Activated naive CD4-positive, alpha-beta T cell treated with anti-CD3 and anti-CD28 coated beads for 36 hours (primary cell): ENCODE measurements at regions of chr14 and their contacts with region 1.

Region 1: GRCh38 chr14:56195704-56196103 is 77.5 kb downstream of the PELI2 start:
- DNase-seq: peak; percentile 72
- H3K4me3 Mint-ChIP-seq: peak overlapping the region; percentile 54
- H3K27ac Mint-ChIP-seq: peak overlapping the region; percentile 76
- H3K4me1 Mint-ChIP-seq: peaks cover 25% of the 10 kb centered on the region
- H3K27me3 Mint-ChIP-seq: no peaks in the 10 kb centered on the region

Region 2: GRCh38 chr14:56081139-56081538 is 114.6 kb before region 1 on chr14:
- CTCF ChIA-PET with region 1: no interaction called
- intact Hi-C with region 1: no loop called
- DNase-seq: no peak
- H3K4me3 Mint-ChIP-seq: no peak overlapping the region
- H3K27ac Mint-ChIP-seq: no peak overlapping the region
- H3K4me1 Mint-ChIP-seq: no peaks in the 10 kb centered on the region
- H3K27me3 Mint-ChIP-seq: peaks cover 20% of the 10 kb centered on the region

Region 3: DNA sequence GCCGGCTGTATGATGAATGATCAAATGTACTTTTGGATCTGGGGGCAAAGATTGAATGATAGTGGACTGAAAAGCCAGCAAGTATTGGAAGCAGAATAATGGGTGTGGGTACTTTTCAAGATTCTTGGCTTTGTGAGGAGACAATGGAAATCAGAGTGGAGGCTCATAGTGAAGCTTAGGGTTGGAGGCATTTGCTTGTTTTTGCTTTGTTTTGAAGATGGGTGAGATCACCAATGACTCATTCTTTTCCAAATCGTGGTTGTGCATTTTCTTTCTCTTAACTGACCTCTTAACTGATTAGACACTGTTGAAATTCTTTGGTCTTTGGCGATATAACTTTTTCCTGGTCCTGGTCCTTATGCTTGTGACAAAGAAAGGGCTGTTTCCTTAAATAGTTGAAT is 23.1 kb before region 1 on chr14:
- CTCF ChIA-PET with region 1: no interaction called
- intact Hi-C with region 1: loop called (anchors 2 kb)
- DNase-seq: no peak
- H3K4me3 Mint-ChIP-seq: no peak overlapping the region
- H3K27ac Mint-ChIP-seq: no peak overlapping the region
- H3K4me1 Mint-ChIP-seq: peaks cover 45% of the 10 kb centered on the region
- H3K27me3 Mint-ChIP-seq: no peaks in the 10 kb centered on the region